ENCODE measurements at regions of chr6 and their contacts with region 1.

Region 1: GRCh38 chr6:2999618-3000557 is at the start of gene NQO2:
- DNase-seq: peak; percentile 79 to 88 (median 85)
- H3K4me3 ChIP-seq: peak within 1 kb of the TSS; percentile 81 to 92
- H3K4me3 Mint-ChIP-seq: peak within 1 kb of the TSS; percentile 87 to 95 (median 91)
- H3K27ac ChIP-seq: peak within 1 kb of the TSS; percentile 80
- H3K27ac Mint-ChIP-seq: peak within 1 kb of the TSS; percentile 85 to 96 (median 91)
- H3K4me1 ChIP-seq: peaks cover 23% of the 10 kb centered on the region
- H3K4me1 Mint-ChIP-seq: peaks cover 17 to 38% (median 27%) of the 10 kb centered on the region in 4 donors
- H3K27me3 ChIP-seq: no peaks in the 10 kb centered on the region
- H3K27me3 Mint-ChIP-seq: no peaks in the 10 kb centered on the region
- total RNA-seq, gene NQO2: 34.2 to 36.6 TPM

Region 2: DNA sequence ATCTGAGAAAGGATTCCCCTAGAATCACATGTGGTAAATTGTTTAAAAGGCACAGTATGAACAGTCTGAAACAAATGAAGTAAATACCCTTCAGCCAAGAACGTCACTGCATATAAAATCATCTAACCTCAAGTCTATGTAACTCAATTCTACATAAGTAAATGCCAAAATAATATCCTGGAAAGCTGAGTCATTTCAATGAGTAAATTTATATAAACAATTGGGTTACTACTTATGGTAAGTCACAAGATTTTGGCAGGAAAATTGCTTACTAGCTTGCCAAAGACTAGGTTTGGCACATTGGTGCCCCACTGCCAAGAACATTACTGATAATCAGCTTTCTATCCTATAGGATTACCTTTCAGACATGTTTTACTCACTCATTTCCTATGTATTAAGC is 762.9 kb before region 1 on chr6:
- CTCF ChIA-PET with region 1: no interaction called
- POLR2A ChIA-PET with region 1: no interaction called
- intact Hi-C with region 1: no loop called
- DNase-seq: no peak
- H3K4me3 ChIP-seq: no peak overlapping the region
- H3K4me3 Mint-ChIP-seq: no peak overlapping the region
- H3K27ac ChIP-seq: no peak overlapping the region
- H3K27ac Mint-ChIP-seq: no peak overlapping the region
- H3K4me1 ChIP-seq: no peaks in the 10 kb centered on the region
- H3K4me1 Mint-ChIP-seq: peaks cover 6 to 12% (median 11%) of the 10 kb centered on the region in 4 donors
- H3K27me3 ChIP-seq: no peaks in the 10 kb centered on the region
- H3K27me3 Mint-ChIP-seq: no peaks in the 10 kb centered on the region

Region 3: DNA sequence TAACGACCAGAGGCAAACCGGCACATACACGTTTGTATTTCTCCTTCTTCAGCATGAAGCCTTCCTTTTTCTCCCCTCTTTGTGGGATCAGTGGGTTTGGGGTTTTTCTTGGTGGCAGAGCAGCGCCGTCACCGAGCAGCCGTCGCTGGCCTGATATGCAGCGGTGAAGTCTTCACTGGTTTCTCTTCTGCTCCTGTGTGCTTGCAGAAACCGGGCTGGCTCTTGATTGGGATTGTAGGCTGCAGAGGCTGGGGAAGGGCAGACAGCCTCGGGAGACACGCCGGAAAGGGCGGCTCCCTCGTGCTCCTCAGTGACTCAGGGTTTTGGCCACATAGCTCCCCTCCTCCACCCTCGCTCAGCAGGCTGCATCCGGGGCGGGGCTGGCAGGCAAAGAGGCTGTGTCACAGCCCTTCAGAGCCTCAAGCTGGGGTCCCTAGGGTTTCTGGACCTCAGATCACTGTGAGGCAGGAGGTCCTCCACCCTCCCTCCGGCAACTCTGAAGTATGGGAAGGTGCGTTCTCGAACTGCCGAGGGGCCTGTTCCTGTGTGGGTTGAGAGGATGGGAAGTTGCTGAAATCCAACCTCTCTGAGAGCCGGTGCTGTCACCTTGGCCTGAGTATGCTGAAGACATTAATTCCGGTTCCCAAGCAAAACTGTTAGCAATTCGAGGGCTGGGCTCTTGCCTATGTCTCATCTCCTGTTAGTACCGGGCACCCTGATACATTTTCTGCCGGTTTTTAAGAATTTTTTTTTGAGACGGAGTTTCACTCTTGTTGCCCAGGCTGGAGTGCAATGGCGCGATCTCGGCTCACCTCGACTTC is 24.0 kb after region 1 on chr6:
- CTCF ChIA-PET with region 1: interaction called, 70 read pairs
- POLR2A ChIA-PET with region 1: interaction called, 94 read pairs
- intact Hi-C with region 1: loop called (anchors 1 kb)
- DNase-seq: peak; percentile 73 to 91 (median 78)
- H3K4me3 ChIP-seq: peak overlapping the region; percentile 67 to 72
- H3K4me3 Mint-ChIP-seq: peak overlapping the region; percentile 87 to 97 (median 92)
- H3K27ac ChIP-seq: peak overlapping the region; percentile 61
- H3K27ac Mint-ChIP-seq: peak overlapping the region; percentile 91 to 97 (median 92)
- H3K4me1 ChIP-seq: peaks cover 70% of the 10 kb centered on the region
- H3K4me1 Mint-ChIP-seq: peaks cover 34 to 69% (median 54%) of the 10 kb centered on the region in 4 donors
- H3K27me3 ChIP-seq: no peaks in the 10 kb centered on the region
- H3K27me3 Mint-ChIP-seq: no peaks in the 10 kb centered on the region

Region 4: DNA sequence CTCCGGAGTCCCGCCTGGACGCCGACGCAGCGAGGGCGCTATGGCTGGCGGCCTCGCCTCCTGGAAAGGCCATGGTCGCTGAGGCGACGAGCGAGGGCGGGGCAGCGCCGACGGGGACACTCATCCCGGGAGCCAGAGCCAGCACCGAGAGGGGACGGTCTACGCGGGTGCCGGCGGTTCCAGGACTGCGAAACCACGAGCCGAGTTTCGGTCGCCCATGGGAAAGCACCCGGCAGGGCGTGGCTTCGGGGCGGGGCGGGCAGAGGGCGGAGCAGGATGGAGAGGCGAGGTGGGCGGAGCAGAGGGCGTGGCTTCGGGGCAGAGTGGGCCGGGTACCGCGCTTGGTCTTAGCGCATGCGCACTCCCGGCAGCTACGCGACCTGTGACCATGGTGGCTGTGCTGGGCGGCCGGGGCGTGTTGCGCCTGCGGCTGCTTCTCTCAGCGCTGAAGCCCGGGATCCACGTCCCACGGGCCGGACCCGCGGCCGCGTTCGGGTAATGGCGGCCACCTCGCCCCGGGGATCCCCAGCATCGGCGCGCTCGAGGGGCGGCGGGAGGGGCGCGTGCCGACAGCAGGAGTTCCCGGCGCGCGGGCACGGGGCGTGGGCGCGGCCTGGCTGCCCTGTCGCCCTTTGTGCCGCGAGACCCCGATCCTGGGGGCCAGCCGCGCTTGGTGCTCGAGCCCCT is 118.6 kb after region 1 on chr6 and contains the start of gene BPHL:
- CTCF ChIA-PET with region 1: no interaction called
- POLR2A ChIA-PET with region 1: no interaction called
- intact Hi-C with region 1: loop called (anchors 1 kb)
- DNase-seq: peak; percentile 98 to 100 (median 99)
- H3K4me3 ChIP-seq: peak within 1 kb of the TSS; percentile 76 to 94
- H3K4me3 Mint-ChIP-seq: peak within 1 kb of the TSS; percentile 75 to 96 (median 91)
- H3K27ac ChIP-seq: peak within 1 kb of the TSS; percentile 87
- H3K27ac Mint-ChIP-seq: peak within 1 kb of the TSS; percentile 93 to 97 (median 96)
- H3K4me1 ChIP-seq: peaks cover 14% of the 10 kb centered on the region
- H3K4me1 Mint-ChIP-seq: peaks cover 7 to 20% (median 14%) of the 10 kb centered on the region in 4 donors
- H3K27me3 ChIP-seq: no peaks in the 10 kb centered on the region
- H3K27me3 Mint-ChIP-seq: no peaks in the 10 kb centered on the region
- total RNA-seq, gene BPHL: 11.9 to 13.7 TPM

Region 5: DNA sequence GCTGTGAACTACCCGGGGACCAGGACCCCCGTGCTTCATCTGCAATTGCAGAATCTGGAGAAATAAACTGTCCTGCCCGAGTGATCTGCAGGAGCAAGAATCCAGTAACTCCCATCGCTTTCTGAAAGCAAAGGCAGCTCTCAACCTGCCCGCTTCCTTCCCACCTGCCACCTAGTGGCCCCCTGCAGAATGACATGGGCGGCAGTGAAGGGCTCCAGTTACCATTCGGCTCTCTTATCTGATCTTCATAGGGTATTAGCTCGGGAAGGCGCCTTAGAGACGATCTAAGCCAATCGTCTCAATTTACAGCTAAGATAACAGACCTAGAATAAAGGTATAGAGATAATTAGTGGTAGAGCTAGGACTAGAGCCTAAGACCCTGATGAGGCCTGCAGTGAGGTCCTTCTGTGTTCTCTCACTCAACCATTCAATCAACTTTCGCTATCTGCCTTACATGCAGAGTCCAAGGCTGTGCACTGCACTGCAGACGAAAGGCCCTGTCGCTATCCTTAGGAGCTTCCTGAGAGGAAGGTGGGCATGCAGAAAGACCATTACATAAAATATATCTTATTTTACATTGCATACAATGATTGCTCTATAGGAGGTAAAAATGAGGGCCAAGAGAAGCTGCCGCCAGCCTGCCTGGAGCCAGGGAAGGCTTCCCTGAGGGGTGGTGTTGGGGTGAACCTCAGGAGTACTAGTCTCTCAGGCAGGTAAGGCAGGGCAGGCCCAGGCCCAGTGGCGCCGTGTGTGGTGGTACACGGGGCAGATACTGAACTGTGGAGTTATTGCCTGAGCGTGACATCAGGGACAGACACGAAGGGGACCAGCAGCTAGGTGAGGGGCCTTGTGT is 251.8 kb after region 1 on chr6:
- CTCF ChIA-PET with region 1: interaction called, 5 read pairs
- POLR2A ChIA-PET with region 1: no interaction called
- intact Hi-C with region 1: loop called (anchors 2 kb)
- DNase-seq: peak; percentile 73 to 79 (median 77)
- H3K4me3 ChIP-seq: no peak overlapping the region
- H3K4me3 Mint-ChIP-seq: peak overlapping the region in 5 of 8 donors; percentile 15 to 66 (median 61)
- H3K27ac ChIP-seq: no peak overlapping the region
- H3K27ac Mint-ChIP-seq: peak overlapping the region in 1 of 7 donors; percentile 1
- H3K4me1 ChIP-seq: peaks cover 9% of the 10 kb centered on the region
- H3K4me1 Mint-ChIP-seq: peaks cover 4 to 15% (median 6%) of the 10 kb centered on the region in 4 donors
- H3K27me3 ChIP-seq: no peaks in the 10 kb centered on the region
- H3K27me3 Mint-ChIP-seq: peaks cover 26 to 30% of the 10 kb centered on the region in 2 donors